ENCODE measurements at regions of chr7 and their contacts with region 1.

Region 1: GRCh38 chr7:30276203-30276900 is 8.0 kb upstream of the ZNRF2 start:
- DNase-seq: no peak
- H3K4me3 ChIP-seq: no peak overlapping the region
- H3K27ac ChIP-seq: no peak overlapping the region
- H3K4me1 ChIP-seq: peaks cover 0 to 32% (median 12%) of the 10 kb centered on the region in 6 donors
- H3K27me3 ChIP-seq: no peaks in the 10 kb centered on the region
- CTCF ChIP-seq: peak in 9 of 11 experiments; percentile 36 to 69 (median 57)
- POLR2A ChIP-seq: no peak

Region 2: GRCh38 chr7:30116771-30117170 is 159.6 kb before region 1 on chr7:
- intact Hi-C with region 1: no loop called
- DNase-seq: no peak
- H3K4me3 ChIP-seq: no peak overlapping the region
- H3K27ac ChIP-seq: peak overlapping the region in 6 of 8 donors; percentile 1 to 56 (median 32)
- H3K4me1 ChIP-seq: peaks cover 0 to 6% (median 0%) of the 10 kb centered on the region in 6 donors
- H3K27me3 ChIP-seq: no peaks in the 10 kb centered on the region
- CTCF ChIP-seq: no peak
- POLR2A ChIP-seq: no peak

Region 3: GRCh38 chr7:30445770-30446169 is 169.4 kb after region 1 on chr7:
- intact Hi-C with region 1: loop called (anchors 5 kb)
- DNase-seq: peak; percentile 95
- H3K4me3 ChIP-seq: no peak overlapping the region
- H3K27ac ChIP-seq: peak overlapping the region in 6 of 8 donors; percentile 27 to 70 (median 48)
- H3K4me1 ChIP-seq: peaks cover 3 to 30% (median 20%) of the 10 kb centered on the region in 6 donors
- H3K27me3 ChIP-seq: no peaks in the 10 kb centered on the region
- CTCF ChIP-seq: peak; percentile 30 to 76 (median 68)
- POLR2A ChIP-seq: no peak

Region 4: GRCh38 chr7:30564243-30564892 is 288.0 kb after region 1 on chr7:
- intact Hi-C with region 1: loop called (anchors 5 kb)
- DNase-seq: peak; percentile 88
- H3K4me3 ChIP-seq: no peak overlapping the region
- H3K27ac ChIP-seq: no peak overlapping the region
- H3K4me1 ChIP-seq: peaks cover 0 to 28% (median 11%) of the 10 kb centered on the region in 6 donors
- H3K27me3 ChIP-seq: no peaks in the 10 kb centered on the region
- CTCF ChIP-seq: peak; percentile 65 to 92 (median 84)
- POLR2A ChIP-seq: no peak